T-cell (primary cell): ENCODE measurements at regions of chr2 and their contacts with region 1.

Region 1: DNA sequence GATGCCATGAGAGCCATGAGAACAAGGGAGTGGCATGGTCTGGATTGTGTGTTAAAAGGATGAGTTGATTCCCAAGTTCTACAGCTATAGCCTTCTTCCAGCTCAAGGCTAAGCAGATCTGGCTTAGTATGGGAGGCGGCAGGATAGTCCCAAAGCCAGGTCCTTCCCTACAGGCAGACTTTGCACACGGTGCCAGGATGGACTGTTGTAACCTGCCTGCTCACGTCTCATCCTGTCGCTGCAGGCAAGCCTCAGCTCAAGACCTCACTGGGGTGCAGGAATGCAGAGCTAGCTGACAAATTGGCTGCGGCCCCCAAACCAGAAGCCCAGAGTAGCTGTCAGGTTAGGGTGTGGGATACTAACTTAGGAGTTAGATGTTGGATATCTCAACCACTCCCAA is 28.8 kb upstream of the IGFBP5 start:
- DNase-seq: no peak
- ATAC-seq: peak in 1 of 4 experiments; percentile 13
- H3K4me3 ChIP-seq: no peak overlapping the region
- H3K4me3 Mint-ChIP-seq: no peak overlapping the region
- H3K27ac ChIP-seq: no peak overlapping the region
- H3K27ac Mint-ChIP-seq: no peak overlapping the region
- H3K4me1 ChIP-seq: no peaks in the 10 kb centered on the region
- H3K4me1 Mint-ChIP-seq: no peaks in the 10 kb centered on the region
- H3K27me3 ChIP-seq: peaks cover 0 to 11% of the 10 kb centered on the region in 2 experiments
- H3K27me3 Mint-ChIP-seq: peaks cover 11 to 14% of the 10 kb centered on the region in 2 donors

Region 2: GRCh38 chr2:215269397-215270119 is 1454.6 kb before region 1 on chr2:
- CTCF ChIA-PET with region 1: interaction called in 1 of 2 experiments, 11 read pairs
- POLR2A ChIA-PET with region 1: no interaction called
- DNase-seq: peak in 32 of 35 experiments; percentile 2 to 79 (median 38)
- ATAC-seq: no peak
- H3K4me3 ChIP-seq: no peak overlapping the region
- H3K4me3 Mint-ChIP-seq: no peak overlapping the region
- H3K27ac ChIP-seq: no peak overlapping the region
- H3K27ac Mint-ChIP-seq: no peak overlapping the region
- H3K4me1 ChIP-seq: no peaks in the 10 kb centered on the region
- H3K4me1 Mint-ChIP-seq: peaks cover 4 to 5% (median 4%) of the 10 kb centered on the region in 3 donors
- H3K27me3 ChIP-seq: no peaks in the 10 kb centered on the region
- H3K27me3 Mint-ChIP-seq: peaks cover 0 to 6% of the 10 kb centered on the region in 2 donors

Region 3: GRCh38 chr2:215624423-215624829 is 1099.8 kb before region 1 on chr2:
- CTCF ChIA-PET with region 1: no interaction called
- POLR2A ChIA-PET with region 1: no interaction called
- DNase-seq: no peak
- ATAC-seq: no peak
- H3K4me3 ChIP-seq: no peak overlapping the region
- H3K4me3 Mint-ChIP-seq: no peak overlapping the region
- H3K27ac ChIP-seq: no peak overlapping the region
- H3K27ac Mint-ChIP-seq: no peak overlapping the region
- H3K4me1 ChIP-seq: no peaks in the 10 kb centered on the region
- H3K4me1 Mint-ChIP-seq: peaks cover 3 to 8% (median 8%) of the 10 kb centered on the region in 3 donors
- H3K27me3 ChIP-seq: peaks cover 0 to 3% of the 10 kb centered on the region in 2 experiments
- H3K27me3 Mint-ChIP-seq: peaks cover 9 to 10% of the 10 kb centered on the region in 2 donors